ENCODE measurements at regions of chr3 and their contacts with region 1.

Region 1: DNA sequence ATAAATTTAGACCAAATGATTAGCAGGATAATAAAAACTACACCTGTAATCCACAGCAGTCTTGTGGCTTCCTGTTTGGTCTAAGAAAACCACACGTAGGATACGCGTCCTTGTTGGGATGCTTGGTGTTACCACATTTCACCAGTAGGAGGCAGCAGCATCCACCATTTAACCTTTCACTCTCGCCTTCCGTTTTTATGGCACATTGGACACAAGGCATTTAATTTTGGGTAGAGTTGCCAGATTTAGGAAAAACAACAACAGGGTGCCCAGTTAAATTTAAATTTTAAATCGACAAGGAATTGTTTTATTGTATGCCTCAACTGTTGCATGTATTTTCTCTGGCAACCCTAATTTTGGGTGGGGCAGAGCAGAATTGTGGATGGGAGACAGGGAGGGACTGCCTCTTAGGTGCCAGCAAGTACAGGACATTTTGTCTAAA is 6.3 kb downstream of the LRRC31 start:
- DNase-seq: peak; percentile 77
- ATAC-seq: peak; percentile 61
- H3K4me3 Mint-ChIP-seq: no peak overlapping the region
- H3K27ac Mint-ChIP-seq: no peak overlapping the region
- H3K4me1 Mint-ChIP-seq: peaks cover 18% of the 10 kb centered on the region
- H3K27me3 Mint-ChIP-seq: peaks cover 4% of the 10 kb centered on the region

Region 2: DNA sequence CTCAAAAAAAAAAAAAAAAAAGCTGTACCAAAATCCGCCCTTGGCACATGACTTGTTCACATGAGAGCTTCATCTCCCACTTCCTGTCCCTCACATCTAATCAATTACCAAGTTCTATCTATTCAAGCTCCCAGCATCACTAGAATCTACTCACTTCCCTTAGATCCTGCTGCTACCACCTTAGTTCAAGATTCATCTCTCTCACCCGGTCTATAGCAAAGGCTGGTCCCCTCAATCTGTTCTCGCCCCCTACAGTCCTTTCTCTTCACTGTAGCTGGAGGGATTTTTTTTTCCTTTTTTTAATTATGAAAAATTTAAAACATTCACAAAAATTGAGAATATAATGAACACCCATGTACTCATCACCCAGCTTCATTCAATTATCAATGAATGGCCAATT is 157.6 kb after region 1 on chr3:
- CTCF ChIA-PET with region 1: interaction called, 11 read pairs
- POLR2A ChIA-PET with region 1: no interaction called
- intact Hi-C with region 1: loop called in 1 of 2 experiments (anchors 5 kb)
- DNase-seq: no peak
- ATAC-seq: peak; percentile 71
- H3K4me3 Mint-ChIP-seq: no peak overlapping the region
- H3K27ac Mint-ChIP-seq: no peak overlapping the region
- H3K4me1 Mint-ChIP-seq: peaks cover 7% of the 10 kb centered on the region
- H3K27me3 Mint-ChIP-seq: no peaks in the 10 kb centered on the region

Region 3: DNA sequence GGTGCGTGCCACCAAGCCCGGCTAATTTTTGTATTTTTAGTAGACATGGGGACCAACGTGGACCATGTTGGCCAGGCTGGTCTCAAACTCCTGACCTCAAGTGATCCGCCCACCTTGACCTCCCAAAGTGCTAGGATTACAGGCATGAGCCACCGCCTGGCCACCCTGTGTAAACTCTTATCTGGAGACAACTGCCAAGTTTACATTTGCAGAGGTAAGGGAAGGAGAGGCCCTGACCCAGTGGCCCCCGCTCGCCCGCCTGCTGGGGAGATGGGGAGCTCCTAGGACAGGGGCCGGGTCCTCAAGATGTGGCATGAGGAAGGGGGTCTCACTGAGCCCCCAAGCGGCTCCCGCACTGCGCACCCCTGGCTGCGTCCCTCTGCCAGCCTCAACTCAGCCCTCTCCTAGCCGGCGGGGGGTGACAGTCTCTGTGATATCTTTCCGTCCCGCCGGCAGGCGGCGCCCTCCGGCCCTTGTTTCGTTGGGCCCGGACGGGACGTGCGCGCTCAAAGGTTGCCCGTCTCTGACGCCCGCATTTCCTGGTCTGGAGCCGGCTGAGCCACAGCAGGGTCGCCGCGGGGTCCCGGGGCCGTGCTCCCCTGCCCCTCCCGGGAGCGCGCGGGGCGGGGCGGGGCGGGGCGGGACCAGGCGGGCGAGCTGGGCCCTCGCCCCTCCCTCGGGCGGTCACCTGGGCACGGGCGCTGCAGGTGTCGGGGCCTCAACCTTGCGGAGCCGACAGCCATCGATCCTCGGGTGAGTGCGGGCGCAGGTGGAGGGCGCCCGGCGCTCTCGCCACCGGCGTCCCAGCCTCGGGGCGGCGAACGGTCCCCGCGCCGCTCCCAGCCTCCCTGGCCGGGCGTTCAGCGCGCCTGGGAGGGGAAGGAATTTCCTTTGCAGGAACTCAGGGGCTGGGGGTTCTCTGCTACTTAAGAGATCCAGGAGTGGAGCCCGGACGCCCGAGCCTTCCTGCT is 174.3 kb after region 1 on chr3 and contains the start of gene GPR160:
- CTCF ChIA-PET with region 1: interaction called, 3 read pairs
- POLR2A ChIA-PET with region 1: no interaction called
- intact Hi-C with region 1: loop called in 1 of 2 experiments (anchors 5 kb)
- DNase-seq: peak; percentile 92
- ATAC-seq: peak; percentile 92
- H3K4me3 Mint-ChIP-seq: peak within 1 kb of the TSS; percentile 79
- H3K27ac Mint-ChIP-seq: no peak within 1 kb of the TSS
- H3K4me1 Mint-ChIP-seq: peaks cover 19% of the 10 kb centered on the region
- H3K27me3 Mint-ChIP-seq: no peaks in the 10 kb centered on the region
- total RNA-seq, gene GPR160: 9.4 to 11.1 TPM

Region 4: DNA sequence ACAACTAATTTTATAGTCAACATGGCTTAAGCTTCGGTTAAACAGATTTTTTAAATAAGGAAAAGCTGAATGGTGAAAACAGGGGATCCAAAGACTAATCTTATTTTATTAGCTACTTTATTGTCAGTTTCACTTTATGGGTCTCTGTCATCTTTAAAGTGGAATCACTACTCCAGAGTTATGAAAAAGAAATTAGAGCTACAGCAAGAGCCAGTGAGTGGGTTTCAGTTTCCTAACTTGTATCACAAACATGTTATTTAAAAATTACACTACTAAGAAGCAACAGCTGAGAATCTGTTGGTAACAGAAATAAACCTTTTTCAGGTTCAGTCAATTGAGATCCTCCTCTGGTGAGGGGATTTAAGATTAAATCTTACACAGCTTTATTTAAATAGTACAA is 308.1 kb after region 1 on chr3:
- CTCF ChIA-PET with region 1: no interaction called
- POLR2A ChIA-PET with region 1: no interaction called
- intact Hi-C with region 1: loop called in 1 of 2 experiments (anchors 10 kb)
- DNase-seq: no peak
- ATAC-seq: peak; percentile 79
- H3K4me3 Mint-ChIP-seq: peak overlapping the region; percentile 32
- H3K27ac Mint-ChIP-seq: peak overlapping the region; percentile 63
- H3K4me1 Mint-ChIP-seq: peaks cover 64% of the 10 kb centered on the region
- H3K27me3 Mint-ChIP-seq: no peaks in the 10 kb centered on the region

Region 5: DNA sequence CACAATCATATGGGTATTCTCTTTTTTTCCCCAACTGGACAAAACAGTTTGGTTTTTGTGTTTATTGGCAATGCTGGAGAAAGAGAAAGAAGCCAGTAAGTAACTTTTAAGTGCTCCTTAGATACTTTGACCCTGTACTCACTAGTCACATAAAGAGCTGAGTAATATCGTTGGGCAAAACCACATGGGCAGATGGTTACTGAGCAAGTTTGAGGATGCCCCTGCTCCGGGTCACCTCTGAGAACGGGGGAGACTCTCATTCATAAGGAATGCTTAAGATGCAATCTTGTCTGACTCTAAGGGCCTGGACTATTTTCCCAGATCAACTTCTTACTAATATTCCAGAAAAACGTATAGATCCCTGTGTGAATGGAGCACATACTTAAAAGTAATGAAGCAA is 1269.4 kb after region 1 on chr3:
- CTCF ChIA-PET with region 1: no interaction called
- POLR2A ChIA-PET with region 1: no interaction called
- intact Hi-C with region 1: no loop called
- DNase-seq: no peak
- ATAC-seq: no peak
- H3K4me3 Mint-ChIP-seq: no peak overlapping the region
- H3K27ac Mint-ChIP-seq: no peak overlapping the region
- H3K4me1 Mint-ChIP-seq: no peaks in the 10 kb centered on the region
- H3K27me3 Mint-ChIP-seq: no peaks in the 10 kb centered on the region